GM18951 (cell line): ENCODE measurements at regions of chr1 and their contacts with region 1.

Region 1: GRCh38 chr1:153365303-153366095 is 7.8 kb downstream of the S100A9 start:
- POLR2A ChIP-seq: no peak

Region 2: GRCh38 chr1:153113416-153113815 is 252.1 kb before region 1 on chr1 and contains the start of gene SPRR2F:
- in situ Hi-C with region 1: no loop called
- POLR2A ChIP-seq: no peak

Region 3: GRCh38 chr1:153488731-153489130 is 123.2 kb after region 1 on chr1:
- in situ Hi-C with region 1: loop called (anchors 10 kb)
- POLR2A ChIP-seq: no peak